B cell (primary cell): ENCODE measurements at regions of chr9 and their contacts with region 1.

Region 1: DNA sequence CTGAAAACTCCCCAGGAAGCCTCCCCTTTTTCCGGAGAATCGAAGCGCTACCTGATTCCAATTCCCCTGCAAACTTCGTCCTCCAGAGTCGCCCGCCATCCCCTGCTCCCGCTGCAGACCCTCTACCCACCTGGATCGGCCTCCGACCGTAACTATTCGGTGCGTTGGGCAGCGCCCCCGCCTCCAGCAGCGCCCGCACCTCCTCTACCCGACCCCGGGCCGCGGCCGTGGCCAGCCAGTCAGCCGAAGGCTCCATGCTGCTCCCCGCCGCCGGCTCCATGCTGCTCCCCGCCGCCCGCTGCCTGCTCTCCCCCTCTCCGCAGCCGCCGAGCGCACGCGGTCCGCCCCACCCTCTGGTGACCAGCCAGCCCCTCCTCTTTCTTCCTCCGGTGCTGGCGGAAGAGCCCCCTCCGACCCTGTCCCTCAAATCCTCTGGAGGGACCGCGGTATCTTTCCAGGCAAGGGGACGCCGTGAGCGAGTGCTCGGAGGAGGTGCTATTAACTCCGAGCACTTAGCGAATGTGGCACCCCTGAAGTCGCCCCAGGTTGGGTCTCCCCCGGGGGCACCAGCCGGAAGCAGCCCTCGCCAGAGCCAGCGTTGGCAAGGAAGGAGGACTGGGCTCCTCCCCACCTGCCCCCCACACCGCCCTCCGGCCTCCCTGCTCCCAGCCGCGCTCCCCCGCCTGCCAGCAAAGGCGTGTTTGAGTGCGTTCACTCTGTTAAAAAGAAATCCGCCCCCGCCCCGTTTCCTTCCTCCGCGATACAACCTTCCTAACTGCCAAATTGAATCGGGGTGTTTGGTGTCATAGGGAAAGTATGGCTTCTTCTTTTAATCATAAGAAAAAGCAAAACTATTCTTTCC is 19.4 kb downstream of the CDKN2A start:
- DNase-seq: peak; percentile 72
- ATAC-seq: peak; percentile 48
- H3K4me3 ChIP-seq: peak overlapping the region in 4 of 5 experiments; percentile 35 to 60 (median 50)
- H3K4me3 Mint-ChIP-seq: peak overlapping the region; percentile 69
- H3K27ac ChIP-seq: no peak overlapping the region
- H3K27ac Mint-ChIP-seq: peak overlapping the region; percentile 56
- H3K4me1 ChIP-seq: peaks cover 24 to 34% of the 10 kb centered on the region in 2 donors
- H3K4me1 Mint-ChIP-seq: peaks cover 22% of the 10 kb centered on the region
- H3K27me3 ChIP-seq: peaks cover 7 to 93% (median 84%) of the 10 kb centered on the region in 4 experiments
- H3K27me3 Mint-ChIP-seq: peaks cover 77% of the 10 kb centered on the region
- CTCF ChIP-seq: no peak

Region 2: DNA sequence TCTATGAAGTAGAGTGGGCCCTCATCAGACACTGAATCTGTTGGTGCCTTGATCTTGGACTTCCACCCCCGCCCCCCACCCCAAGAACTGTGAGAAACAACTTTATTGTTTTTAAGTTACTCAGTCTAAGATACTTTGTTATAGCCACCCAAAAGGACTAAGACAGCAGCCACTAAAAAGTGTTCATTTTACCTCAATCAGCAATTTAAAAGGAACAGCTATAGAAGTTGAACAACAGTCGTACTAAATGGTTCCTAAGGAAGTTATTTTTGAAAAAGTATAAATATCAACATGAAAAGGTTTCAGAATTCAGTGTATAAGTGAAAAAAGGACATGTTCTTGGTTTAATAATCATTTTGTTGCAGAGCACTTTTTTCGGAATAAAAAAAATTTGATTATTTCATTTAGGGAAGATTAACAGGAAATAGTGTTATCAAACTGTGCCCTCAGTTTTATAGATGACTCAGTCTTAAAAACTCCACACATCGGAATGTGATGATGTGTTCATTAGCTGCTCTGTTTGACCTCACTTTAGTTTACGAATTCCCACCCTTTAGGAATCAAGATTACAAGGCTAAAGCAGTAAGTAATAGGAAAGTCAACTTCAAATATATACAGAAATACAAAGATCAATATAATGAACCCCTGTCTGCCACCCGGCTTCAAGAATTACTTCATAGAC is 101.1 kb before region 1 on chr9:
- CTCF ChIA-PET with region 1: no interaction called
- POLR2A ChIA-PET with region 1: no interaction called
- intact Hi-C with region 1: no loop called
- DNase-seq: no peak
- ATAC-seq: no peak
- H3K4me3 ChIP-seq: no peak overlapping the region
- H3K4me3 Mint-ChIP-seq: no peak overlapping the region
- H3K27ac ChIP-seq: no peak overlapping the region
- H3K27ac Mint-ChIP-seq: no peak overlapping the region
- H3K4me1 ChIP-seq: no peaks in the 10 kb centered on the region
- H3K4me1 Mint-ChIP-seq: peaks cover 5% of the 10 kb centered on the region
- H3K27me3 ChIP-seq: no peaks in the 10 kb centered on the region
- H3K27me3 Mint-ChIP-seq: no peaks in the 10 kb centered on the region
- CTCF ChIP-seq: no peak

Region 3: DNA sequence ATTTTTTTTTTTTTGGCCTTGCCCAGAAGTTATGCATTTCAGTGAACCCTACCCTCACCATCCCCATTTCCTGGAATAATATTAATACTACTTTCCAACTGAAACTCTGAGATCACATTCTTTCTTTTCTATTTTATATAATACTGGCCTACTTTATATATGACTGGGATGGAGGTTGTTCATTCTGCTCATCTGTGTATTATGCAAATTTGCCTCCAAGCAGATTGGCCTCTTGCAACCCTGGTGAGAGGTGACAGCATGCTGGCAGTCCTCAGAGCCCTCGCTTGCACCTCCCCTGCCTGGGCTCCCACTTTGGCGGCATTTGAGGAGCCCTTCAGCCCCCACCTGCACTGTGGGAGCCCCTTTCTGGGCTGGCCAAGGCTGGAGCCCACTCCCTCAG is 15.9 kb before region 1 on chr9:
- CTCF ChIA-PET with region 1: no interaction called
- POLR2A ChIA-PET with region 1: interaction called, 12 read pairs
- intact Hi-C with region 1: no loop called
- DNase-seq: no peak
- ATAC-seq: no peak
- H3K4me3 ChIP-seq: no peak overlapping the region
- H3K4me3 Mint-ChIP-seq: no peak overlapping the region
- H3K27ac ChIP-seq: no peak overlapping the region
- H3K27ac Mint-ChIP-seq: no peak overlapping the region
- H3K4me1 ChIP-seq: no peaks in the 10 kb centered on the region
- H3K4me1 Mint-ChIP-seq: no peaks in the 10 kb centered on the region
- H3K27me3 ChIP-seq: peaks cover 0 to 27% (median 17%) of the 10 kb centered on the region in 4 experiments
- H3K27me3 Mint-ChIP-seq: peaks cover 40% of the 10 kb centered on the region
- CTCF ChIP-seq: no peak

Region 4: DNA sequence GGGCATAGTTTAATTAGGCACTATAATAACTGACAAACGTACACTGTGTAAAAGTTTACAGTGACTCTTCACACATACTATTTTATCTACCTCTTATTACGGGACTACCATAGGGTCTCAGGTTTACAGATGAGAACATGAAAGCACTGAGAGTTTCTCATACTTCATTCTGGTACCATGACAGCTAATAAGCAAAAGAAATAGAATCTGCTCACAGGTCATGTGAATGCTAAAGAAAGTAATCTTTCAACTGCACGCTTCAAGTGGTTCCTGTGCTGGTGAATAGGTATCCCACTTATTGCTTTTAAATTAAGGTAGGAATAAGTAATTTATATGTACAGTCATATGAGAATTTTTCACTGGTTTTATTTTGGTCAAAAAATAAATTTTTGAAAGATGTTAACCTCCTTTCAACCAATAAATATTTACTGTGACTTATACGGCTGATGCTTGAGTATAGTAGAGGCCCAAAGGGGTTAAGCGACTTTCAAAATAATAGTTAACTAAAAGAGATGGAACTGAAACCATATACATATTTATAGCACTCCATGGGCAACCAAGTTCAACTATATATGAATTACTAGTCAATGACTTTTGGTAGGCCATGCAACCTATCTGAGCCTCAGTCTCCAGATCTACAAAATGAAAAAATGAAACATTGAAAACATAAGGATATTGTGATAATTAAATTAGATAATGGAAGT is 11.3 kb after region 1 on chr9:
- CTCF ChIA-PET with region 1: interaction called, 6 read pairs
- POLR2A ChIA-PET with region 1: no interaction called
- intact Hi-C with region 1: loop called (anchors 1 kb)
- DNase-seq: no peak
- ATAC-seq: no peak
- H3K4me3 ChIP-seq: no peak overlapping the region
- H3K4me3 Mint-ChIP-seq: no peak overlapping the region
- H3K27ac ChIP-seq: no peak overlapping the region
- H3K27ac Mint-ChIP-seq: no peak overlapping the region
- H3K4me1 ChIP-seq: peaks cover 0 to 16% of the 10 kb centered on the region in 2 donors
- H3K4me1 Mint-ChIP-seq: peaks cover 9% of the 10 kb centered on the region
- H3K27me3 ChIP-seq: peaks cover 3 to 66% (median 25%) of the 10 kb centered on the region in 4 experiments
- H3K27me3 Mint-ChIP-seq: peaks cover 52% of the 10 kb centered on the region
- CTCF ChIP-seq: no peak